ENCODE measurements at regions of chr3 and their contacts with region 1.

Region 1: DNA sequence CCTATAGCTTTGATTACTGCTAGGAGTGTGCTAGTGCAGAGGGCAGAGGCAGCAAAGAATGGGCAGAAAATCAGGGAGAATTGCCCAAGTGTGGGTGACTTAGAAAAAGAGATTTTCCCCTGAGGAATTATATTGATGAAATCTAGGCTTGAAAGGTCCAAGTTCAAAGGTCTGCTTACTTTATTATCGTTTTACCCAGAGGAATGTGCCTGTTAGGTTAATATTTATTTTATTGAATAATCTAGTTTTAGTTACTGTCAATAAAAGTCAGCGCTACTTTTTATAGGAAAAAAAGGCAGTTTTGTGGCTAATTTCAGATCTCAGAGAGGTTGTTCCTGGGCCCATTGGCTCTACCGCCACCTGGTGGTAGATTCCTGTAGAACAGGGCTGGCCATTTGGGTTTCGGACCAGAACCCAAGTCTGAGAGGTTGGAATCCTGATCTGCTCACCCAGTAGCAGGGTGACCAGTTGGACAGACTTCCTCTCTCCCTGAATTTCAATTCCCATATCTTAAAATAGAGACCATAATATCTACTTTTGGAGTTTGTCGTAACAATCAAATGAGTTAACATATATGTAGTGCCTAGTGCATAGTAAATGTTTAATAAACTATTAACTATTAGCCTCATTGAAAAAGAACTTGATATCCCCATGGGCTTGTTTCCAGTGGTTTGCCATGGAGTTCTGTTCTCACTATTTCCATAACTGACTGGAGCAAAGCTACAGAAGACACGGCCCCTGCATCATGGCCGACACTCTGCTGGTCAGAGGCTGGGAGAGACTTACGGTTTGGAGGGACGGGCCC is 62.7 kb upstream of the ZNF148 start:
- DNase-seq: no peak
- ATAC-seq: peak; percentile 78
- H3K4me3 ChIP-seq: no peak overlapping the region
- H3K27ac ChIP-seq: no peak overlapping the region
- H3K4me1 ChIP-seq: no peaks in the 10 kb centered on the region
- H3K27me3 ChIP-seq: no peaks in the 10 kb centered on the region
- CTCF ChIP-seq: peak; percentile 99

Region 2: GRCh38 chr3:124935264-124935663 is 502.6 kb before region 1 on chr3:
- intact Hi-C with region 1: loop called (anchors 10 kb)
- DNase-seq: no peak
- ATAC-seq: no peak
- H3K4me3 ChIP-seq: no peak overlapping the region
- H3K27ac ChIP-seq: no peak overlapping the region
- H3K4me1 ChIP-seq: no peaks in the 10 kb centered on the region
- H3K27me3 ChIP-seq: no peaks in the 10 kb centered on the region
- CTCF ChIP-seq: no peak

Region 3: DNA sequence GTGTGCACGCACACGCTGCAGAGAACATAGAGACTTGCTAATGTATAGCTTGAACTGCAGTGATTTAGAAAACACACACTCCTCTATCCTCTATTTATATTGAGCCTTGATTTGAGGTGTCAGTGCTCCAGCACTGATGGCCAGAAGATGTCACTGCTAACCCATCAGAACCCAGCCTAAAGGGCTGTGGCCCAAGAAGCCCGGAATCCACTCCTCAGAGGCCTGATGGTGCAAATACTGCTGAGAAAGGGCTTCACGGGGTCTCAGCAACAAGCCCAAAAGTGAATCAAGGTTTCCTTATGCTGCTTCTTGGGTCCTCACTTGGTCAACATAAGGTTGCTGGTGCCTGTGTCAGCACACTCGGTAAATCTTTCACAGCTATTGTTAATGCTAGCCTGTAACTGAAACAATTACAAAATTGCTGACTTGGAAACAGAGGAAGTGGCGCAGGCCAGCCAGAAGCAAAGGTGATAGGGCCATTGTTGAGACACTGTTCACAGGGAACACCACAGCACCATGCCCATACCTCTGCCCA is 442.3 kb before region 1 on chr3:
- intact Hi-C with region 1: loop called (anchors 10 kb)
- DNase-seq: no peak
- ATAC-seq: peak; percentile 87
- H3K4me3 ChIP-seq: no peak overlapping the region
- H3K27ac ChIP-seq: no peak overlapping the region
- H3K4me1 ChIP-seq: peaks cover 26% of the 10 kb centered on the region
- H3K27me3 ChIP-seq: no peaks in the 10 kb centered on the region
- CTCF ChIP-seq: peak; percentile 67

Region 4: GRCh38 chr3:125767641-125768040 is 329.8 kb after region 1 on chr3:
- intact Hi-C with region 1: no loop called
- DNase-seq: no peak
- ATAC-seq: no peak
- H3K4me3 ChIP-seq: no peak overlapping the region
- H3K27ac ChIP-seq: no peak overlapping the region
- H3K4me1 ChIP-seq: no peaks in the 10 kb centered on the region
- H3K27me3 ChIP-seq: no peaks in the 10 kb centered on the region
- CTCF ChIP-seq: no peak